Activated B cell treated with CpG ODN at 0.5 μM for 24 hours (primary cell): ENCODE measurements at regions of chrX and their contacts with region 1.

Region 1: GRCh38 chrX:68511255-68511654 is 12.4 kb downstream of the YIPF6 start:
- DNase-seq: no peak
- ATAC-seq: peak; percentile 68
- H3K4me3 Mint-ChIP-seq: no peak overlapping the region
- H3K27ac Mint-ChIP-seq: no peak overlapping the region
- H3K4me1 Mint-ChIP-seq: peaks cover 20% of the 10 kb centered on the region
- H3K27me3 Mint-ChIP-seq: no peaks in the 10 kb centered on the region
- CTCF ChIP-seq: peak; percentile 16

Region 2: GRCh38 chrX:68710870-68711576 is 199.8 kb after region 1 on chrX:
- CTCF ChIA-PET with region 1: no interaction called
- POLR2A ChIA-PET with region 1: no interaction called
- intact Hi-C with region 1: loop called (anchors 10 kb)
- DNase-seq: no peak
- ATAC-seq: no peak
- H3K4me3 Mint-ChIP-seq: no peak overlapping the region
- H3K27ac Mint-ChIP-seq: no peak overlapping the region
- H3K4me1 Mint-ChIP-seq: no peaks in the 10 kb centered on the region
- H3K27me3 Mint-ChIP-seq: no peaks in the 10 kb centered on the region
- CTCF ChIP-seq: no peak

Region 3: DNA sequence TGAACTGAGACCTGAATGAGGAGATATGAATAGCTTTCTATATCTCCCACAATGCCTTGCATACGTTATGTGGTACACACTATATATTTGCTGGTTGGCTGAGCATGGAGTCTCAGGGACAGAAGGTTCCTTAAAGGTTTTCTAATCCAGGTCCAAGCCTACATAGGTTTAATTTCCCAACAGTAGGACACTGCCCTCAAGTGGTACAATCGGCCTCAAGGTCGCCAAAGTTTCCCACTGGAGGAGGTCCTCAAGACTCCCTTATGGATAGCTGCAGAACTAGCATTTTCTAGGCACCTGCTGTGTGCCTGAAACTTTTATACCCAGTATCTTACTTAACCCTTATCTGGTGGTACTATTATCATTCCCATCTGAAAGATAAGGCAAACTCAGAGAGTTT is 296.6 kb after region 1 on chrX:
- CTCF ChIA-PET with region 1: no interaction called
- POLR2A ChIA-PET with region 1: no interaction called
- intact Hi-C with region 1: loop called (anchors 5 kb)
- DNase-seq: no peak
- ATAC-seq: no peak
- H3K4me3 Mint-ChIP-seq: no peak overlapping the region
- H3K27ac Mint-ChIP-seq: no peak overlapping the region
- H3K4me1 Mint-ChIP-seq: no peaks in the 10 kb centered on the region
- H3K27me3 Mint-ChIP-seq: peaks cover 9% of the 10 kb centered on the region
- CTCF ChIP-seq: no peak

Region 4: DNA sequence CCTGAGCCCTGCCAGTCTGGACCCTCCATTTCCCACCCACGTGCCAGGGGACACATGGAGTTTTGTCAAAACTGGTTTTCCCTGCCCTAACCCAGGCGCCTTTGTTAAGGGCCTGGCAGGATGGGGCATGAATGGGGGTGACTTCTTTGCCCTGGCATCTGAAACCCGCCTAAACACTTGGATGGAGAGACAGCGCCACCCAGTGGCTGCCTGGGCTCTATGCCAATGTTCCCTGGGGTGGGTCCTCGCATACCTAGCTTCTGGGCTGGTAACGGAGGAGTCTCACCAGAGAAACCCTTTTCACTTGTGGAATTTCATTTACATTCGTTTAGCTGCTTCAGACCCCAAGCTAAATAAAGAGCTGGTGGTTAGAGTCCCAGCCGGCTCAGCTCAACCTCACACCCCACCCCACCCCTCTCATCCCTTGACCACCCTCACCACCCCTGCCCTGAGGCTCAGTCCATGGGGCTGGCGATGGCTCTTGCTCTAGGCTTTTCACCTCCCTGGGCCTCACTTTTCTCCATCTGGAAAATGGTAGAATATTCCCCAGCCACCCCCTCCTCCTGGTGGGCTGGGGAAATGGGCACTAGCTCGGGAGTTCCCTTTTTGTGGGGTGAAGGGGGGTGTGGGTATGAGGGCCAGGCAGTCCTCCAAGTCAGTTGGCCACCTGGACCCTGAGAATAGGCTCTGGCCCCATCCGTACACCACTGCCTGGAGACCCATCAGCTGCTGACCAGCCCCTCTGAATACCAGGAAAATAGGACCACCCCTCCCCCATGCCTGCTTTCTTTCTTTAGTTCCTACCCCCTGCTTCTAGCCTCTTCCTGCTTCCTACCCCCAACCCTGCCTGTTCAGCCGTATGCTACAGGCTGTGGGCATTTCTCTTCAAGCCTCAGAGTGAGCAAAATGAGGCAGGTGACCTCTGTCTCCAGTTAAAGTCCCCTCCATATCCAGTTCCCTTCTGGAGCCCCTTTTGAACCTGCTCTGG is 711.1 kb after region 1 on chrX:
- CTCF ChIA-PET with region 1: no interaction called
- POLR2A ChIA-PET with region 1: no interaction called
- intact Hi-C with region 1: loop called (anchors 1 kb)
- DNase-seq: peak; percentile 45
- ATAC-seq: peak; percentile 71
- H3K4me3 Mint-ChIP-seq: no peak overlapping the region
- H3K27ac Mint-ChIP-seq: no peak overlapping the region
- H3K4me1 Mint-ChIP-seq: peaks cover 1% of the 10 kb centered on the region
- H3K27me3 Mint-ChIP-seq: peaks cover 2% of the 10 kb centered on the region
- CTCF ChIP-seq: no peak

Region 5: GRCh38 chrX:69285881-69286564 is 774.8 kb after region 1 on chrX:
- CTCF ChIA-PET with region 1: no interaction called
- POLR2A ChIA-PET with region 1: no interaction called
- intact Hi-C with region 1: loop called (anchors 5 kb)
- DNase-seq: peak; percentile 42
- ATAC-seq: peak; percentile 54
- H3K4me3 Mint-ChIP-seq: peak overlapping the region; percentile 52
- H3K27ac Mint-ChIP-seq: no peak overlapping the region
- H3K4me1 Mint-ChIP-seq: peaks cover 2% of the 10 kb centered on the region
- H3K27me3 Mint-ChIP-seq: no peaks in the 10 kb centered on the region
- CTCF ChIP-seq: no peak